ENCODE measurements at regions of chr20 and their contacts with region 1.

Region 1: DNA sequence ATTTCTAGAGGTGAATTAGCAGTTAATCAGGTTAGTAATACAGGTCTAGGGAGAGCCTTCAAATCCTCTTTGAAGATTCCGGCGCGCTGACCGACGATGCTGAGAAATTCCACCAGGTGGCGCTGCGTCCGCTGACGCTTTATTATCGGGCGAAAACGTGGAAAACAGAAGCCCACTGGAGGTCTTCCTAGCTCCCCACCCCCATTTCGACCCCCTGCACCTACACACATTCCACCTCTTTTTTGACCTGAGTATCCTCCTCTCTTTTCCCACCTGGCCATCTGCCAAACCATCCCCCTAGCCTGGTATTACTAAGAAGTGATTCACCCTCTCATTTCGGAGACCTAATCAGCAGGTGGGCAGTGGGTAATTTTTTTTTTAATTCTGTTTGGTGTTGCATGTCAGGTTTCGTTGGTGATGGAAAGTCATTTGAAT is 65.4 kb upstream of the RIN2 start:
- DNase-seq: peak in 1 of 2 donors; percentile 39
- ATAC-seq: peak; percentile 18 to 31
- H3K4me3 ChIP-seq: peak overlapping the region in 3 of 4 donors; percentile 1 to 24 (median 12)
- H3K27ac ChIP-seq: peak overlapping the region in 2 of 4 donors; percentile 76 to 77
- H3K4me1 ChIP-seq: peaks cover 21 to 23% of the 10 kb centered on the region in 2 donors
- H3K27me3 ChIP-seq: no peaks in the 10 kb centered on the region
- CTCF ChIP-seq: peak; percentile 89 to 96 (median 89)
- POLR2A ChIP-seq: no peak

Region 2: GRCh38 chr20:19757487-19758132 is 64.9 kb after region 1 on chr20:
- in situ Hi-C with region 1: loop called in 1 of 4 experiments (anchors 10 kb)
- intact Hi-C with region 1: loop called (anchors 1 kb)
- DNase-seq: peak; percentile 89 to 91
- ATAC-seq: peak; percentile 67 to 72
- H3K4me3 ChIP-seq: peak overlapping the region; percentile 82 to 100 (median 94)
- H3K27ac ChIP-seq: peak overlapping the region; percentile 97 to 99 (median 98)
- H3K4me1 ChIP-seq: peaks cover 31 to 39% of the 10 kb centered on the region in 2 donors
- H3K27me3 ChIP-seq: no peaks in the 10 kb centered on the region
- CTCF ChIP-seq: no peak
- POLR2A ChIP-seq: peak; percentile 46 to 62

Region 3: DNA sequence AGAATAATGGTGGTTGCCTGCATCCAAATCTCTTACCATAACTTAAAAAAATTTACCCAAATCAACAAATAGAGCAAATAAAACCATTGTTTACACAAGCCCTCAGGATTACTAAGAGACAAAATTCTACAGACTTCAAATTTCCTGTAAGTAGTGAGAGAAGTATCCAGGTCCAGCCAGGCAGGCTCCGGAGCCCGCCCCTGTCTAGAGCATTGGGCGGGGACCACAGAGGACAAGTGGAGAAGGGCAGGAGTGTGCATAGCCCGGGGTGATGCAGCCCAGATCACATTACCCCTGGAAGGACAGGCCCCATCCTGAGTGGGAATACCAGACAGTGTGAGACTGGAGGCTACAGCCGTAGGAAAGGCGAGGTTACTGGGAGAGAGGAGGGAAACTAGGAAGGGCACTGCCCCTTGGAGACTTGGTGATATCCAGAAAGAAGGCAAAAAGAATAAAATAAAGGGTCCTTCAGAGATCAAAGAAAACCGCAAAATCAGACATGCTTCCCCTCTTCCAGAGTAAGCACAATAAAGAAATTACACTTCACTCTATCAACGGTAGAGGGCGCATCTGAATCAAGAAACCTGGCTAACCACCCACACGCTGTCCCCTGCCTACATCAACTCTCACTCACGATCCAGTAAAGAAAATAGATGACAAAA is 91.9 kb after region 1 on chr20:
- in situ Hi-C with region 1: loop called in 2 of 4 experiments (anchors 10 to 25 kb)
- intact Hi-C with region 1: loop called (anchors 5 kb)
- DNase-seq: peak; percentile 41 to 64
- ATAC-seq: peak; percentile 84 to 87
- H3K4me3 ChIP-seq: no peak overlapping the region
- H3K27ac ChIP-seq: peak overlapping the region; percentile 34 to 71 (median 62)
- H3K4me1 ChIP-seq: peaks cover 32 to 51% of the 10 kb centered on the region in 2 donors
- H3K27me3 ChIP-seq: no peaks in the 10 kb centered on the region
- CTCF ChIP-seq: peak; percentile 76 to 84 (median 80)
- POLR2A ChIP-seq: no peak

Region 4: GRCh38 chr20:19889011-19889953 is 196.6 kb after region 1 on chr20:
- in situ Hi-C with region 1: loop called in 1 of 4 experiments (anchors 25 kb)
- intact Hi-C with region 1: loop called (anchors 5 kb)
- DNase-seq: peak in 1 of 2 donors; percentile 28
- ATAC-seq: peak; percentile 72 to 82
- H3K4me3 ChIP-seq: peak overlapping the region; percentile 36 to 42 (median 39)
- H3K27ac ChIP-seq: peak overlapping the region; percentile 67 to 80 (median 77)
- H3K4me1 ChIP-seq: peaks cover 50 to 64% of the 10 kb centered on the region in 2 donors
- H3K27me3 ChIP-seq: no peaks in the 10 kb centered on the region
- CTCF ChIP-seq: no peak
- POLR2A ChIP-seq: no peak

Region 5: DNA sequence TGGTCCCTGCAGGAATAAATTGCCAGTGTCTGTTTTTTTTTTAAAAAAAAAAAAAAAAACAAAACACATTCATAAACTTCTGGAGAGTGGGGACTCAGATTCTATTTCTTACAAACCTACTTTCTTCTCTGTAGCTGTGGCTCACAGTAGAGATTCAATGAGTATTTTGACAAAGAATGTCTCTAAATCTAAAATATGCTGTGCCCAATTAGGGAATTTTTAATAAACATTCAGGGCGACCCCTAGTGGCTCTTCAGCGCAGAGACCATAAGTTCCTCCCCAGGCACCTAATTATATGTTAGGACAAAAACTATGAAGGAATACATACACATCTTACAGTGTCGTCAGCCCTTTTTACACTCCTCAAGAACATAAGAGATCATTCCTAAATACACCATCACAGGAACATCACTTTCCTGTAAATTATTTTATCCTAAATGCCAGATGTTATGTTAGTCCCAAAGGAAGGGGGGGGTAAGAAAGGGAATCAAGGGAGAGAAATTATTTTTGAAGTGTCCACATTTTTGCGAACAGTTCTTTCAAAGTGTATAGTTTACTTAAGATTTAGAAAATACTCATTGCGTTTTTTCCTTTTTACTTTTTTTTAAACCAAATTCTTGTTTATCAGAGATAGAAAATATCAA is 302.6 kb after region 1 on chr20:
- in situ Hi-C with region 1: loop called in 3 of 4 experiments (anchors 5 to 10 kb)
- intact Hi-C with region 1: loop called (anchors 2 kb)
- DNase-seq: no peak
- ATAC-seq: no peak
- H3K4me3 ChIP-seq: no peak overlapping the region
- H3K27ac ChIP-seq: peak overlapping the region; percentile 78 to 91 (median 80)
- H3K4me1 ChIP-seq: peaks cover 58 to 81% of the 10 kb centered on the region in 2 donors
- H3K27me3 ChIP-seq: no peaks in the 10 kb centered on the region
- CTCF ChIP-seq: peak; percentile 71 to 85 (median 83)
- POLR2A ChIP-seq: no peak